ENCODE measurements at regions of chr15 and their contacts with region 1.

Region 1: DNA sequence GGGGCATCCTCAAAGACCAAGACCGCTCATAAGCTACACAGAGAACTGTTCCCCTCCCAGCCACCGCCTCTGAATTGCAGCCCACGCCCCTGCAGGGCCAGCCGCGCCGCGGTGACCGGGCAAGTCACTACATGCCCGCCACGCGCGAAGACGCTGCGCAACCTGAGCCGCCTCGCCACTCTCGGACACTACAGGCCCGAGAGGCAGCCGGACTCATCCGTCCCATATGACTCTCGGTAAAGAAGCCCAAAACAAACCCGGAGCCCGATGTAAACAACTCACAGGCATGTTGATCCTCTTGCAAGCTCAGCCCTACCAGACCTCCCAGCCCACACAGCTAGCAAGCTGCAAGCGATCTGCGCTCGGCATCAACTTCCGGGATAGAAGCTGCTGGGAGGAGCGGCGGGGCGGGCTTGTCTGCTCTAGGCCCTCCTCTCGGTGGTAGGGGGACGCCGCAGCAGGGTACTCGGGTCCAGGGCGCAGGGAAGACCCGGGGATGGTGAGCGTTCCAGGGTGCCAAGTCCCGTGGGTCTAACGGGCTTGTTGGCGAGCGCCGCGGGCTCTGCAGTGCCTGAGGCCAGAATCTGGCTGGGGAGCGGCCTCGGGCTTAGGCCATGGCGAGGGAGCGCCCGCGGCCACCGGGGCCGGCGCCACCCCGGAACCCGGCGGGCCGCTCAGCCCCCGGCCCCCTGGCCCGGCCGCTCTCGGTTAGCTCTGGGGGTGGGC is at the start of gene RPS27L:
- DNase-seq: peak; percentile 98
- total RNA-seq, gene RPS27L: 160 to 259 TPM

Region 2: GRCh38 chr15:62896978-62897647 is 260.2 kb before region 1 on chr15:
- intact Hi-C with region 1: no loop called
- DNase-seq: peak; percentile 95

Region 3: DNA sequence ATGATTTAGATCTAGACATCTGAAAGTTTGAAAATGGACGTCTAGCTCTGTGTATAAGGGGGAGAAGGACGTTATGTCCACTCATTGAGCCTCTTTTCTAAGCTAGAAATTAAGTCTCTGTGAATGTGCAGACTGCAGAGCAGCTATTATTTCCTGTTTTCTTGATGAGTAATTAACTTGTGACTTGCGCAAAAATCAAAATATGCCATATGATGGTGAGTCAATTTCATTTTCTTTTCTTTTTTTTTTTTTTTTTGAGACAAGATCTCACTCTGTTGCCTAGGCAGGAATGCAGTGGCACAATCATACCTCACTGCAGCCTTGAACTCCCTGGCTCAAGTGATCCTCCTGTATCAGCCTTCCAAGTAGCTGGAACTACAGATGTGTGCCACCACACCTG is 21.5 kb before region 1 on chr15:
- intact Hi-C with region 1: loop called in 1 of 2 experiments (anchors 1 kb)
- DNase-seq: no peak

Region 4: DNA sequence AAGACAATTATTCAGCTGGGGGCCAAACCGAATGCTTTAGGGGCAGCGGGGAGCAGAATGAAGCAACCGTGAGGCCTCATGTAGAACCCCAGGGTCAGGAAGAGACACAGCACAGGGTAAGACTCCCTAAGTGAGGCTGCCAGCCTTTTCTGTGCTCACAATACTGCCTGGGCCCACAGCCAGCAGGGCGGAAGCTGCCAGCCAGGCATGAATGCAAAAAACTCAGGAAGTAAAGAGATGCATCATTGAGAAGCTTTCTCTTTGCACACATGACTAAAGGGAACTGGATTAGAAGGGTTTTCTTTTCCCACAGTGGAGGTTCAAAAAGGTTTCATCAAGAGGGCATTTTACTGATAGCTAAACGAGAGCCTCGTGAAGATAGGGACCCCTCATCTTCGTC is 191.1 kb after region 1 on chr15:
- intact Hi-C with region 1: no loop called
- DNase-seq: peak; percentile 87

Measured in posterior vena cava (tissue), 2 donors.